ENCODE measurements at regions of chr7 and their contacts with region 1.

Region 1: GRCh38 chr7:100827330-100828227 is at the start of gene EPHB4:
- DNase-seq: peak; percentile 86
- ATAC-seq: peak; percentile 92
- total RNA-seq, gene EPHB4: 27.0 TPM

Region 2: GRCh38 chr7:100745184-100745583 is 82.4 kb before region 1 on chr7:
- intact Hi-C with region 1: no loop called
- DNase-seq: no peak
- ATAC-seq: peak; percentile 71

Region 3: GRCh38 chr7:100803398-100804233 is 24.0 kb before region 1 on chr7:
- intact Hi-C with region 1: loop called (anchors 2 kb)
- DNase-seq: peak; percentile 82
- ATAC-seq: peak; percentile 85

Region 4: DNA sequence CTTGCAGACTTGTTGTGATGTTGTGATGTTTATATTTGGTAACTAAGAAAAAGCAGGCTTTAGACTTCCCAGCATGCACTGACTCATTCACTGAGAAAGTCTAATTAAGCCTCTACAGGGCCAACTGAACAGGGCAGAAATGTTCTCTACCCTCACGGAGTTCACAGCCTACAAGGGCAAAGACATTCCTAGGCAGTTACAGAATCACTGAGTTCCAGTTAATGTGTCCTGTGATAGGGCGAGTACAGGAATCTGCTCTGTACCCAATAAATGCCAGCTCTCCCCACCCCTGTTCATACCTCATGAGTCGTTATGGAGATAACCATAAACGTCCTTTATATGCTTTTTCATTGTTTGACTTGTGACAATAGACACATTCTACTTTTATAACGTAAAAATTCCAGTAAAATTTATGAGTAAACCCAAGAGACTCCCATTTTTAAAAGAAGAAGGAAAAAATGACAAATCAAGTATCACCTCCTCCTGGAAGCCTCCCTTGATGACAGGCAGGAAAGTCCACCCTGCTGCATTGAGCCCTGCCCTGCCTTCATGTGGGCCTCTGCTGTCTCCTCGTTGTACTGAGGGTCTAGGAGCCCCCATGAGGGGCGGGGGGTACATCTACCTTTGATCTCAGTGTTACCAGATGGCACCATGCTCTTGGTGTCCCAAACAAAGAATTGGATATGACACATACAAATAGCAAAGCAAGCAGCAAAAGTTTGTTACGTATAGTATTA is 156.0 kb after region 1 on chr7:
- intact Hi-C with region 1: no loop called
- DNase-seq: no peak
- ATAC-seq: no peak

Region 5: DNA sequence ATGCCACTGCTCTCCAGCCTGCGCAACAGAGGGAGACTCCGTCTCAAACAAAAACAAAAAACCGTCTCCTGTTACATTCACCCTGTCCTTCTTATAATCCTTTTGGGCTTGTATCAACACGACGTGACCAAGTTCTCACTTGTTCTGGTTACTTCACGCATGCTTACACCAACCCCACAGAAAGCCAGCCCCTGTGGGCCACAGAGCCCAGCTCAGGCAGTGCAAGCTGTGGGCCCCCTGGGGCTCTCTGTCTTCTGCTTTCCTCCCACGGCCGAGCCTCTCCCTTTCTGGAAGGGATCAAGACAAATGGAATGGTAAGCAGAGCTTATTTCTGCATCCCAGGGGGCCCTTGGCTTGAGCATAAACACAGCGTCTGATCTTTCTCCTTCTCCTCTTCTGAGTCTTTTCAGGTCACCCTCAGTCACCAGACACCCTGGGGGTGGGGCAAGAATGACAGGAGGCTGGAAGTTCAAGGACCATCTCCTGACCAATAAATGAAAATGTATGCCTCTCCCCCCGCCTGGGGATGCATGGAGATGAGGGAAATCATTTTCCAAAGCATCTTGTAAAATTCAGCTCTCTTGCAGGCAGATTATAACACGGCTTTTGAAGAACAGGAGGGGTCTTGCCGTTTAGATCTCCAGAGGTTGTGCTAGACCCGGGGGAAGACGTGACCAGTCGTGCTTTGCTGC is 238.7 kb after region 1 on chr7:
- intact Hi-C with region 1: no loop called
- DNase-seq: no peak
- ATAC-seq: peak; percentile 46